B cell (primary cell): ENCODE measurements at regions of chr1 and their contacts with region 1.

Region 1: DNA sequence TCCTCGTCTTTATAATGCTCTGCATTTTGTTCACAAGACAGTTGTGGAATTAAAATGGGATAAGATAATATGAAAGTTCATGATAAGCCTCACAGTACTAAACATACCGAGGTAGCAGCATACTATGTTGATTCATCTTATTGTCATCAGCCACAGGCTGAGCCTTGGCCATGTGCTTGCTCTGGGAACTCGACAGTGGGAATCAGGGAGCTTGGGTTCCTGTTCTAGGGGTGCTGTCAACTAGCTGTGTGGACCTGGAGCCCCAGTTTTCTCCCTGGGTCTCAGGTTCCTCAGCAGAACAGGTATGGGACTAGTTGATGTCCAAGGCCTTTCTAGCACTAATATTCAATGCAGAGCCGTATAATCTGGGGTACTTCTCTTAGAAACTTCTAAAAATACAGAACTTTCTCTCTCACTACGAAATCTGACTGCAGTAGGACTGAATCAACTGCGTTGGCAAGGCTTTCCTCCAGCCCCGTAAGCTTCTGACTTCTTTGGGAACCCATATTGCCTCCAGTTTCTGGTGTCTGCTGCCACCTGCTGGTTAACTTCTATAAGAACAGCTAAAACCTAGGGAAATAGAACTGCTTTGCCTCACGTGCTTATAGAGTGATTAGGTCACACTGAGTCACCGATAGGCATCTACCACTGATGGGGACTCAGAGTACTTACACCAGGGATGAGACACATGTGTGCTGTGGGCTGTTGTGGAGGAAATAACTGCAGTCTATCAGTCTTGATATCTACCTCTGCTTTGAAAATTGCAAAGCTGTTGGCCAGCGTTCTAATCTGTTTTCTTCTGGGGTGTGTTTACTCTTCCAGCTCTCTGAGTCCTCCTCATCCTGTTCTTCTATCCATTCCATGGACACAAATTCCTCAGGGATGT is 110.9 kb downstream of the RGL1 start:
- DNase-seq: peak; percentile 83
- ATAC-seq: peak; percentile 53
- H3K4me3 ChIP-seq: no peak overlapping the region
- H3K4me3 Mint-ChIP-seq: no peak overlapping the region
- H3K27ac ChIP-seq: no peak overlapping the region
- H3K27ac Mint-ChIP-seq: peak overlapping the region; percentile 22
- H3K4me1 ChIP-seq: peaks cover 20 to 24% of the 10 kb centered on the region in 2 donors
- H3K4me1 Mint-ChIP-seq: peaks cover 30% of the 10 kb centered on the region
- H3K27me3 ChIP-seq: peaks cover 0 to 3% (median 0%) of the 10 kb centered on the region in 4 experiments
- H3K27me3 Mint-ChIP-seq: no peaks in the 10 kb centered on the region
- CTCF ChIP-seq: peak; percentile 93

Region 2: DNA sequence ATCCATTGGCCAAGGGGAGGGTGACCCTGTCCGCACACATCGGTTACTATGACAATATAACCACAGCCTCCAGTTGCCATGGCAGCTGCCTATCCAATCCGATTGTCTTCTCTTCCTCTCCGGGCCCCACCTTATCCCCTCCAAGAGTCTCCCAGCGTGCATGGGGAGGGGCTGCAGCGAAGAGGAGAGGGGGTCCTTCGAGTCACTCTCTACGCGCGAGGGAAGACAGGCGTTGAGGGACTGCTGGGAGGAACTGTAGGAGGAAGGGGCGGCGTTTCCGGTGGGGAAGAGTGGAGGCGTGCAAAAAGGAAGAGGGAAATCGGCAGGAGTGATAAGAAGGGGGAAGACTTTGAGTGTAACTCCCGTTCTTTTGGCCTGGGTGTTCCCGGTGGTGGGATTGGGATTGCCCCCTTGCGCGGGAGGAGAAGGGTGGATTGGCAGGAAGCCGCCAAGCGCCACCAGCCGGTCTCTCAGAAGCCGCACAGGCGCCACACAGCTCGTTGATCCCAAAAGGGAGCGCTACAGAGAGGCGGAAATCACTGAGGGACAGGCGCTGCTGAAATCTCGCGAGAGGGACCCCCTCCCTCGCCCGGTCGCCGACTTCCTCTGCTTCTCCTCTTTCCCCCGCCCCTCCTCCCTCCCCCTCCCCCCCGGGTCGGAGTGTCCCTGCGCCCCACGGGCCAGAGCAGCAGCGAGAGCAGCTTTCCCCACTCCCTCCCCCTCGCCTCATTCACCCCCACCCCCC is 444.0 kb before region 1 on chr1:
- CTCF ChIA-PET with region 1: interaction called, 9 read pairs
- POLR2A ChIA-PET with region 1: no interaction called
- intact Hi-C with region 1: loop called (anchors 2 kb)
- DNase-seq: peak; percentile 98
- ATAC-seq: peak; percentile 70
- H3K4me3 ChIP-seq: peak overlapping the region; percentile 73 to 89 (median 86)
- H3K4me3 Mint-ChIP-seq: peak overlapping the region; percentile 99
- H3K27ac ChIP-seq: peak overlapping the region; percentile 90 to 99
- H3K27ac Mint-ChIP-seq: peak overlapping the region; percentile 100
- H3K4me1 ChIP-seq: peaks cover 12 to 28% of the 10 kb centered on the region in 2 donors
- H3K4me1 Mint-ChIP-seq: peaks cover 35% of the 10 kb centered on the region
- H3K27me3 ChIP-seq: no peaks in the 10 kb centered on the region
- H3K27me3 Mint-ChIP-seq: no peaks in the 10 kb centered on the region
- CTCF ChIP-seq: no peak

Region 3: GRCh38 chr1:183646776-183647175 is 269.1 kb before region 1 on chr1:
- CTCF ChIA-PET with region 1: interaction called, 377 read pairs
- POLR2A ChIA-PET with region 1: no interaction called
- intact Hi-C with region 1: no loop called
- DNase-seq: no peak
- ATAC-seq: no peak
- H3K4me3 ChIP-seq: no peak overlapping the region
- H3K4me3 Mint-ChIP-seq: no peak overlapping the region
- H3K27ac ChIP-seq: no peak overlapping the region
- H3K27ac Mint-ChIP-seq: no peak overlapping the region
- H3K4me1 ChIP-seq: no peaks in the 10 kb centered on the region
- H3K4me1 Mint-ChIP-seq: no peaks in the 10 kb centered on the region
- H3K27me3 ChIP-seq: no peaks in the 10 kb centered on the region
- H3K27me3 Mint-ChIP-seq: peaks cover 31% of the 10 kb centered on the region
- CTCF ChIP-seq: no peak

Region 4: GRCh38 chr1:183694066-183694465 is 221.8 kb before region 1 on chr1:
- CTCF ChIA-PET with region 1: interaction called, 10 read pairs
- POLR2A ChIA-PET with region 1: no interaction called
- intact Hi-C with region 1: loop called (anchors 10 kb)
- DNase-seq: no peak
- ATAC-seq: no peak
- H3K4me3 ChIP-seq: no peak overlapping the region
- H3K4me3 Mint-ChIP-seq: no peak overlapping the region
- H3K27ac ChIP-seq: no peak overlapping the region
- H3K27ac Mint-ChIP-seq: no peak overlapping the region
- H3K4me1 ChIP-seq: no peaks in the 10 kb centered on the region
- H3K4me1 Mint-ChIP-seq: no peaks in the 10 kb centered on the region
- H3K27me3 ChIP-seq: no peaks in the 10 kb centered on the region
- H3K27me3 Mint-ChIP-seq: peaks cover 3% of the 10 kb centered on the region
- CTCF ChIP-seq: no peak

Region 5: GRCh38 chr1:183761871-183762270 is 154.0 kb before region 1 on chr1:
- CTCF ChIA-PET with region 1: no interaction called
- POLR2A ChIA-PET with region 1: no interaction called
- intact Hi-C with region 1: no loop called
- DNase-seq: no peak
- ATAC-seq: no peak
- H3K4me3 ChIP-seq: no peak overlapping the region
- H3K4me3 Mint-ChIP-seq: no peak overlapping the region
- H3K27ac ChIP-seq: no peak overlapping the region
- H3K27ac Mint-ChIP-seq: no peak overlapping the region
- H3K4me1 ChIP-seq: no peaks in the 10 kb centered on the region
- H3K4me1 Mint-ChIP-seq: no peaks in the 10 kb centered on the region
- H3K27me3 ChIP-seq: no peaks in the 10 kb centered on the region
- H3K27me3 Mint-ChIP-seq: peaks cover 4% of the 10 kb centered on the region
- CTCF ChIP-seq: no peak

Region 6: GRCh38 chr1:183896466-183897048 is 19.3 kb before region 1 on chr1:
- CTCF ChIA-PET with region 1: interaction called, 72 read pairs
- POLR2A ChIA-PET with region 1: interaction called, 6 read pairs
- intact Hi-C with region 1: no loop called
- DNase-seq: no peak
- ATAC-seq: no peak
- H3K4me3 ChIP-seq: no peak overlapping the region
- H3K4me3 Mint-ChIP-seq: no peak overlapping the region
- H3K27ac ChIP-seq: no peak overlapping the region
- H3K27ac Mint-ChIP-seq: no peak overlapping the region
- H3K4me1 ChIP-seq: peaks cover 8 to 12% of the 10 kb centered on the region in 2 donors
- H3K4me1 Mint-ChIP-seq: peaks cover 16% of the 10 kb centered on the region
- H3K27me3 ChIP-seq: no peaks in the 10 kb centered on the region
- H3K27me3 Mint-ChIP-seq: peaks cover 4% of the 10 kb centered on the region
- CTCF ChIP-seq: no peak

Region 7: DNA sequence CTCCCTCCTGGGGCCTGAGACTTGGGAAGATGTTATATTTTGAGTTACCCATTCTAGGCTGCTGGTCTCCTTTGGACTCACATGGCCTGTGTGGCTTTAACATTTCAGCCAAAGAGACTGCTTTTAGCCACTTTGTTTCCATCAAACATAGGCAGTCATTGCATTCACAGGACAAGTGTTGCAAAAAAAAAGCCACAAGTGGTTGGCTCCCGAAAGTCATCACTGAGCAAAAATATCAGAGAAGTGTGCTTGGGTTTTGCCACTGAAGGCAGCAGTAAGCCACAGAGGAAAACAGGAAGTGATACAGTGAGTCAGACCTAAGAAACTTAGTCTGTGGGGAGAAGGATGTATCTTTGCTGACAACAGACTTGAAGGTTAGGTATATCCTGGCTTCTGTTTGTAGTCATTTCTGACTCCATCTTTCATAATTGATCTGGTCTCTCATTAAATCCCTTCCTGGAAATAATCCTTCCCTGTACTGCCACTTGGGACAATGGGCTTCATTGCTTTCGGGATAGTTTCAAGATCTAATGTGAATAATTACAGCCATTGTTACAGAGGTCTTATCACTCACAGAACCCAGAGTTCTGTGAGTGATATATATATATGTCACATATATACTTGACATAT is 40.8 kb after region 1 on chr1:
- CTCF ChIA-PET with region 1: interaction called, 21 read pairs
- POLR2A ChIA-PET with region 1: no interaction called
- intact Hi-C with region 1: loop called (anchors 2 kb)
- DNase-seq: peak; percentile 65
- ATAC-seq: peak; percentile 98
- H3K4me3 ChIP-seq: no peak overlapping the region
- H3K4me3 Mint-ChIP-seq: no peak overlapping the region
- H3K27ac ChIP-seq: no peak overlapping the region
- H3K27ac Mint-ChIP-seq: peak overlapping the region; percentile 85
- H3K4me1 ChIP-seq: peaks cover 8 to 9% of the 10 kb centered on the region in 2 donors
- H3K4me1 Mint-ChIP-seq: peaks cover 7% of the 10 kb centered on the region
- H3K27me3 ChIP-seq: peaks cover 0 to 2% (median 0%) of the 10 kb centered on the region in 4 experiments
- H3K27me3 Mint-ChIP-seq: peaks cover 9% of the 10 kb centered on the region
- CTCF ChIP-seq: no peak

Region 8: DNA sequence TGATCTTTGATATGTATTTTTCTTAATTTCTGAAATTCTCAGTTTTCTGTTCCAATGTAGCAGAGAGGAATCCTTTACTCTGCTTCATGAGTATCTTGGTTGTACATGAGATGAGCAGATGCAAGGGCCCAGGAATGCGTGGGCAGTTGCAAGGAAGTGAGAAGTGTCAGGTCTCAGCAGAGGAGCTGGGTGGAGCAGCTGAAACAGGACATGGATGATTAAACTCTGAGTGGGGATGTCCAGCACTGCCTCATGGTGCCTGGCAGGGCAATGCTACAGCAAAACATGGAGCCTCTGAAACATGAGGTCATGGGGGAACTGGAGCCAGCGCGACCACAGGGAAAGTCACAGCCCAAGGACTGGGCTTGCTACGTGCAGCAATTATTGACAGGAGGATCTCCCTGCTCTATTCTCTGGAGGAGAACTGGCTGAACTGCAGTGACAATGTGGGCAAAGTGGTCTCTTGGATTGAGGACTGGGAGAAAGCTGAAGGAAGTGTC is 73.3 kb after region 1 on chr1:
- CTCF ChIA-PET with region 1: no interaction called
- POLR2A ChIA-PET with region 1: no interaction called
- intact Hi-C with region 1: no loop called
- DNase-seq: no peak
- ATAC-seq: no peak
- H3K4me3 ChIP-seq: no peak overlapping the region
- H3K4me3 Mint-ChIP-seq: no peak overlapping the region
- H3K27ac ChIP-seq: no peak overlapping the region
- H3K27ac Mint-ChIP-seq: no peak overlapping the region
- H3K4me1 ChIP-seq: no peaks in the 10 kb centered on the region
- H3K4me1 Mint-ChIP-seq: peaks cover 5% of the 10 kb centered on the region
- H3K27me3 ChIP-seq: no peaks in the 10 kb centered on the region
- H3K27me3 Mint-ChIP-seq: peaks cover 32% of the 10 kb centered on the region
- CTCF ChIP-seq: no peak